ENCODE measurements at regions of chr5 and their contacts with region 1.

Region 1: GRCh38 chr5:153496835-153497234 is 6.4 kb downstream of the GRIA1 start:
- DNase-seq: no peak

Region 2: GRCh38 chr5:153014194-153014593 is 482.6 kb before region 1 on chr5:
- intact Hi-C with region 1: no loop called
- DNase-seq: no peak

Region 3: DNA sequence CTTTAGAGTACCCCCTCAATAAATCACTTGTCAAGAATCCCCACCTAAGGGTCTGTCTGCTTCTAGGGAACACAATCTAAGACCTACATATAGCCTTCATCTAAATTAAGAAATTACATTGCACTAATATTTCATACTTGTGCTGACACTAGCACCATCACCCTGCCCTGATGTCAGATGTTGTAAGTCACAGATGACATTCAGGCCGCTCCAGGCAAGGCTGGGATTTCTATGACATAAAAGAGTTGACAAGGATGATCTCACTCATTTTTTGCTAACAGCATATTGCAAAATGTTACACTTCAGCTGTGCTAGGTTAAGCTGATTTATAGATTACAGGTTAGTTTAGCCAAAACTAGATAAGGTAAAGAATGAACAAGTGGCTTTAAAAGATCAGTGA is 378.8 kb before region 1 on chr5:
- intact Hi-C with region 1: no loop called
- DNase-seq: no peak

Region 4: DNA sequence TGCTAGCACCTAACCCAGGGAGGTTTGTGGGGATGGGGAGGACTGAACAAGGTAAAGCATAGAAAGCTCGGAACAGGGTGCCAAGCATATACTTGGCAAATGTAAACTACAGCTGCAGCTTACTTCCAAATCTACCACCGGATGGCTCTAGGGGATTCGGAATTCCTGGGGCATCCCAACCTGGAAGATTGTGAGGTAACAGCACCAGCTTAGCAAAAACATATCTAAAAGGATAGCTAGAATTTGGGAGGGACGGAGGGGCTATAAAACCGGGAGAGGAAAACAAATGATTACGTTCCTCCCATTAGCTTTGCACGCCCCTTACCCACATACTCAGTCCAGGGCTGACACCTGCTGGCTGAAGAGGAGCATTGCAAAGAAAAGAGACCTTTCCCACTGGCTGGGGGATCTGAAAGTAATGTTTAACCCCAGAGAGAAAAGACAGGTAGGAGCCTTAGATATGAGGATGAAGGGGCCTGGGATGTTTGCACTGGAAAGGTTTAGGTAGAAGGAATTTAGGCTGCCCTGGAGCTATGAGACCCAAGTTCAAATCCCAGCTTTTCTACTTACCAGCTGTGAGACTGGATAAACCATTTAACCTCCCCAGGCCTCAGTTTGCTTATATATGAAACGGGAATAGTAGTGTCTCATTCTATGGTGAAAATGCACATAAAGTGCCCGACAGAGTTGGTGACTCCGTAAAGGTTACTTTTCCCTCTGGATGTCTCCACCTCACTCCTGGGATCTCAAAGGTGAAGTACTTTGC is 468.2 kb after region 1 on chr5:
- intact Hi-C with region 1: loop called (anchors 2 kb)
- DNase-seq: peak in 7 of 10 donors; percentile 36 to 93 (median 59)

Region 5: GRCh38 chr5:153981905-153982605 is 485.2 kb after region 1 on chr5:
- intact Hi-C with region 1: no loop called
- DNase-seq: no peak

Measured in posterior cingulate gyrus (tissue), 11 donors.